Mammary epithelial cell (primary cell): ENCODE measurements at regions of chr5 and their contacts with region 1.

Region 1: GRCh38 chr5:147857302-147858129 is 21.0 kb upstream of the SCGB3A2 start:
- DNase-seq: peak; percentile 44
- H3K4me3 ChIP-seq: no peak overlapping the region
- H3K27ac ChIP-seq: no peak overlapping the region
- H3K4me1 ChIP-seq: no peaks in the 10 kb centered on the region
- H3K27me3 ChIP-seq: no peaks in the 10 kb centered on the region
- CTCF ChIP-seq: peak; percentile 78 to 82

Region 2: DNA sequence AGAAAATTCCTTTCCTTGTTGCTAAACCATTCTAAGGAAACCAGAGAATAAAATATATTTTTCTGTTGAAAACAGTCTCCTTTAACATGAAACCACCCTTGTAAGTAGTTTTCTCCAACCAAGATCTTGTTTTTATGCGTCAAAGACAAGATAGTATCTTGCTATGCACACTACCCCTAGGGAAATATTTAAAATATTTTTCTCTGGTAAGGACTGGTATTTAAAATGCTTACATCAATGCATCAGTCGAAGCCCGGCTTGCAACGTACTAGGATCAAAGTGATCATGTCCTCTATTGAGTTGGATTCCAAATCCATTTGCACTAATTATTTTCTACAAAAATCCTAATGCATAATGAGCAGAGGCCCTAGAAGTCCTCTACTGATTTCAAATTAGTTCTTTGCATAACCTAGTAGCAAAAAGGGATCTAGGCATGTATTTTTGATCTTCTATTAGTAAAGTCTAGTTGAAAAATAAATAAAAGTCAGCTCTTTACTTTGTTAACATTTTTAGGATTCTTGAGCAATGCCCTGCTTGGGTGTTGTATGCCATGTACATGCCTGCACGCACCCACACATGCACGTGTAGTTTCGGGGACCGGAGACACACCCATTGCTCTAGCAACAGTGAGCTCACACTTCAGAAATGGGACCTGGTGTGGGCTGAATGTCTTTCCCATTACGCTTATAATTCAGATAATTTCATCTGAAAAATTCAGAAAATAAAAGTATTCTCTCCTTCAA is 1176.5 kb before region 1 on chr5:
- CTCF ChIA-PET with region 1: interaction called, 10 read pairs
- dilution Hi-C with region 1: no loop called
- in situ Hi-C with region 1: no loop called
- intact Hi-C with region 1: no loop called
- DNase-seq: peak; percentile 37
- H3K4me3 ChIP-seq: no peak overlapping the region
- H3K27ac ChIP-seq: no peak overlapping the region
- H3K4me1 ChIP-seq: no peaks in the 10 kb centered on the region
- H3K27me3 ChIP-seq: no peaks in the 10 kb centered on the region
- CTCF ChIP-seq: no peak

Region 3: GRCh38 chr5:147935032-147935431 is 77.5 kb after region 1 on chr5:
- CTCF ChIA-PET with region 1: no interaction called
- dilution Hi-C with region 1: no loop called
- in situ Hi-C with region 1: no loop called
- intact Hi-C with region 1: loop called (anchors 1 kb)
- DNase-seq: peak; percentile 69
- H3K4me3 ChIP-seq: no peak overlapping the region
- H3K27ac ChIP-seq: no peak overlapping the region
- H3K4me1 ChIP-seq: peaks cover 4% of the 10 kb centered on the region
- H3K27me3 ChIP-seq: no peaks in the 10 kb centered on the region
- CTCF ChIP-seq: peak; percentile 64

Region 4: GRCh38 chr5:148107608-148108007 is 250.1 kb after region 1 on chr5:
- CTCF ChIA-PET with region 1: no interaction called
- dilution Hi-C with region 1: no loop called
- in situ Hi-C with region 1: loop called in 1 of 2 experiments (anchors 25 kb)
- intact Hi-C with region 1: loop called (anchors 10 kb)
- DNase-seq: no peak
- H3K4me3 ChIP-seq: no peak overlapping the region
- H3K27ac ChIP-seq: no peak overlapping the region
- H3K4me1 ChIP-seq: no peaks in the 10 kb centered on the region
- H3K27me3 ChIP-seq: no peaks in the 10 kb centered on the region
- CTCF ChIP-seq: peak; percentile 31 to 56

Region 5: DNA sequence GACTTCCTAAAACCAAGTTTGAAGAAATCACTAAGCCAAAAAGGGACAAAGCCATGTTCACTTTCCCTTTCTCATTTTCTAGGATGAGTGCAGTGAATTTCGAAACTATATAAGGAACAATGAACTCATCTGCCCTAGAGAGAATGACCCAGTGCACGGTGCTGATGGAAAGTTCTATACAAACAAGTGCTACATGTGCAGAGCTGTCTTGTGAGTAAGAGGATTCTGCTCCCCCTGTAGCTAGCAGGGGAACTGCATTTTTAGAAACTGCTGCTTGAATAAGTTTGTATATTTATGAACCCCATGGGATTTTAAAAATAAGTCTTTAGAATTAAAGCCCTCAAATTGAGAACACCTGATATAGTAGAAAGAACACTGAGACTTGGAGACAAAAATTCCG is 268.1 kb after region 1 on chr5:
- CTCF ChIA-PET with region 1: no interaction called
- dilution Hi-C with region 1: loop called (anchors 25 kb)
- in situ Hi-C with region 1: loop called in 1 of 2 experiments (anchors 25 kb)
- intact Hi-C with region 1: no loop called
- DNase-seq: peak; percentile 12
- H3K4me3 ChIP-seq: no peak overlapping the region
- H3K27ac ChIP-seq: no peak overlapping the region
- H3K4me1 ChIP-seq: no peaks in the 10 kb centered on the region
- H3K27me3 ChIP-seq: no peaks in the 10 kb centered on the region
- CTCF ChIP-seq: peak; percentile 20 to 40

Region 6: DNA sequence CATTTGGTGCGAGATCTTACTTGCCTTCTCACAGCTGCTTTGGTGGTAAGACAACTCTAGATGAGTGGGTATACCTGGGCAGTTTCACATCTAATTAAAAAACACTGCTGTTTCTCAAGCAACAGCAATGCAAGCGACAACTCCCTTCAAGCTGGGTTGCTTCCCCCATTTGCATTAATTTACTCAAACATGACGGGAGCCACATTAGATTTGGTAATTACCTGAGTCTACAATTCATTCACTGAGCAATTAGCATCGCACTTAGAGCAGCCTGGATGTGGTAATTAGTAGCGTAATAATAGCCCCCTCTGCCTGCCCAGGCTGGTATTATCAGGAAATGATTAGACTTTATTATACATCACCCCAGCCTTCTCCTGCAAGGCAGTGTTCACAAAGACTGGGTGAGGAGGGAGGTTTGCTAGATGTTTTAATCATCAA is 599.7 kb after region 1 on chr5:
- CTCF ChIA-PET with region 1: no interaction called
- dilution Hi-C with region 1: no loop called
- in situ Hi-C with region 1: no loop called
- intact Hi-C with region 1: no loop called
- DNase-seq: no peak
- H3K4me3 ChIP-seq: no peak overlapping the region
- H3K27ac ChIP-seq: no peak overlapping the region
- H3K4me1 ChIP-seq: no peaks in the 10 kb centered on the region
- H3K27me3 ChIP-seq: no peaks in the 10 kb centered on the region
- CTCF ChIP-seq: peak; percentile 44 to 45

Region 7: GRCh38 chr5:148730943-148731861 is 873.7 kb after region 1 on chr5:
- CTCF ChIA-PET with region 1: no interaction called
- dilution Hi-C with region 1: no loop called
- in situ Hi-C with region 1: no loop called
- intact Hi-C with region 1: loop called (anchors 5 kb)
- DNase-seq: peak; percentile 64
- H3K4me3 ChIP-seq: peak overlapping the region in 1 of 3 experiments; percentile 4
- H3K27ac ChIP-seq: no peak overlapping the region
- H3K4me1 ChIP-seq: peaks cover 6% of the 10 kb centered on the region
- H3K27me3 ChIP-seq: no peaks in the 10 kb centered on the region
- CTCF ChIP-seq: peak; percentile 76 to 98